ENCODE measurements at regions of chr14 and their contacts with region 1.

Region 1: DNA sequence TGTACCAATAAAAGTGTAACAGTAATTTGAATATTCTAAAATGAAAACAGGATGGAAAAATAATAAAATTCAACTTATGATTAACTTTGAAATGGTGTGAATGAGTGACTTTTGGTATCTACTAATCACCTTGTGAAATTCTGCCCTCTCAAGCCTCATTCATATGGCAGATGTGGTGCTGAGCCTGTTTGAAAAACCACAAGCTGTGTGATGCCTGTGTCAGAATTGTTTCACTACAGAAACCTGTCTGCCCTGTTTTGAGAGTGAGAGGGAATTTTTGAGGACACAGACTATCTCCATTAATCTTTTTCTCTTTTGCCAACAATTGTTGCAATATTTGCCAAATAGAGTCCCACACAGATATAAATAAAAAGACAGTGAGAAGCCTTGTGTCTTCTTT is 3.9 kb upstream of the RNU6-7 start:
- DNase-seq: no peak
- H3K4me3 Mint-ChIP-seq: no peak overlapping the region
- H3K27ac Mint-ChIP-seq: no peak overlapping the region
- H3K4me1 Mint-ChIP-seq: no peaks in the 10 kb centered on the region
- H3K27me3 Mint-ChIP-seq: no peaks in the 10 kb centered on the region
- CTCF ChIP-seq: no peak

Region 2: GRCh38 chr14:32166029-32166428 is 31.9 kb before region 1 on chr14:
- CTCF ChIA-PET with region 1: no interaction called
- intact Hi-C with region 1: loop called (anchors 1 kb)
- DNase-seq: no peak
- H3K4me3 Mint-ChIP-seq: no peak overlapping the region
- H3K27ac Mint-ChIP-seq: peak overlapping the region; percentile 34
- H3K4me1 Mint-ChIP-seq: peaks cover 11% of the 10 kb centered on the region
- H3K27me3 Mint-ChIP-seq: no peaks in the 10 kb centered on the region
- CTCF ChIP-seq: no peak

Region 3: DNA sequence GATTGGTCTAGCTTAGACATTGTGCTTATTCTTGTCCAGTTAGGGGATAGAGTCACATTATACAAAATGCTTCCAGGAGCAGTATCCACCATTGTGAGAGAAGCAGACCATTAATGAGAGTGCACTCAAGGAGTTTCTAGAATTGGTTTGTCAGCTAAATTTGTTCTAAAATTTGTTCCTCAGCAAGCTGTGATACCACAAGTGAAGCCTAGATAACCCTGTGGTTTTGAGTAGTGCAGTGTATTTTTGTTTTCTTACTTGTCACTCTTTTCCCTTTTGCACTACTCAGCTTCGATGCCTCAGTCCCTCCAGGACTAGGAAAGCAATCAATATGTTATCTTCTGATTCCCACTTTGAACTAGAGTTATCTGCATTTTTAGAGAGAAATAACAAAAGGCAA is 88.7 kb after region 1 on chr14:
- CTCF ChIA-PET with region 1: no interaction called
- intact Hi-C with region 1: no loop called
- DNase-seq: no peak
- H3K4me3 Mint-ChIP-seq: no peak overlapping the region
- H3K27ac Mint-ChIP-seq: no peak overlapping the region
- H3K4me1 Mint-ChIP-seq: no peaks in the 10 kb centered on the region
- H3K27me3 Mint-ChIP-seq: no peaks in the 10 kb centered on the region
- CTCF ChIP-seq: no peak

Region 4: DNA sequence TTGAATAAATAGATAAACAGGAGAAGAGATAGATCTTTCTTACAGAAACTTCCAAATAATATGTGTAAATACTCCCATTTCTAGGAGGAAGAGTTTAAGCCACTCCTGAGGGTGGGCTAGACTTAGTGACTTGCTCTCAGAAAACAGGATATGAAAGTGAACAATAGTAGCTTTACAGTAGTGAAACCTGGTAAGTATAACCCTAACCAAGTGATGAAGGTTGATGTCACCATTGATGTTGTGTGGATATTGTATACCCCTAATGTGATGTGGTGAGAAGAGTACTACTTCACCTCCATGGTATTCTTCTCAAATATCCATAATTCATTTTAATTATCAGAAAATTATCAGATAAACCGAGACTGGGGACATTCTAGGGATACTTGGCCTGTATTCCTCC is 152.1 kb after region 1 on chr14:
- CTCF ChIA-PET with region 1: no interaction called
- intact Hi-C with region 1: no loop called
- DNase-seq: no peak
- H3K4me3 Mint-ChIP-seq: no peak overlapping the region
- H3K27ac Mint-ChIP-seq: no peak overlapping the region
- H3K4me1 Mint-ChIP-seq: peaks cover 8% of the 10 kb centered on the region
- H3K27me3 Mint-ChIP-seq: no peaks in the 10 kb centered on the region
- CTCF ChIP-seq: no peak